K562 (cell line): ENCODE measurements at regions of chr17 and their contacts with region 1.

Region 1: GRCh38 chr17:75667021-75667790 is at the starts of genes RECQL5 and SAP30BP:
- DNase-seq: peak; percentile 92 to 99 (median 96)
- ATAC-seq: peak; percentile 100
- H3K4me3 ChIP-seq: peak within 1 kb of the TSS; percentile 85
- H3K27ac ChIP-seq: peak within 1 kb of the TSS; percentile 81
- H3K4me1 ChIP-seq: peaks cover 3 to 13% of the 10 kb centered on the region in 2 experiments; a peak in 4 of 5 replicates
- H3K27me3 ChIP-seq: no peaks in the 10 kb centered on the region
- CTCF ChIP-seq: no peak
- EP300 ChIP-seq: no peak
- POLR2A ChIP-seq: peak; percentile 91
- RAD21 ChIP-seq: no peak
- polyA plus RNA-seq, gene RECQL5: 4.1 to 5.8 TPM
- polyA plus RNA-seq, gene SAP30BP: 103 to 154 TPM

Region 2: DNA sequence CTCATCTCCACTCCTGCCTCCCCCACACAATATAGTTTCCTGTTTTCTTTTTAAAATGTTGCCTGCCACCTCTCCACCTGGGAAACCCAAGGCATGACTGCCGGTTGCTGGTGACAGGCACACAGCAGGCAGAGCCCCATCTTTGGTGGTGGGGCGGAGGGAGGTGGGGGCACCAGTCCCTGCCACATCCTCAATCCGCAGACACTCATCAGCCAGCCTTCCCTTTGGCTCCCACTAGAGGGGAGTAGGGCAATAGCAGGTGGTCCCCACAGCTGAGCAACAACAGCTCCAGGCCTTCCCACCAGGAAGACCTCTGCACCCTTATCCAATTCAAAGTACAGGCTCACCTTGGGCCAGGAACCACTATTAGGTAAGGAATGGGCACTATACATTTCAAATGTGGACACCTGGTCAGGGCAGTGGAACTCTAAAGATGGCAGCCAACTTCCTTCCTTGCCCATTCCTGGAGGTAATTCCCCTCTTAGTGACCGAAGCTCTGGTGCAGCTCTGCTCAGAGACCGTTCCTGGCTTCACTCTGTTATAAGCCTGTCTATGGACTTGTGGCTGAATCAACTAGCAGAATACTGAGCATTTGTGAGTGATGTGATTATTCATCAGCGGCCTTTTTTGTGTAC is 14.2 kb before region 1 on chr17:
- CTCF ChIA-PET with region 1: no interaction called
- POLR2A ChIA-PET with region 1: interaction called, 12 read pairs
- in situ Hi-C with region 1: no loop called
- intact Hi-C with region 1: no loop called
- DNase-seq: peak; percentile 63 to 71 (median 66)
- ATAC-seq: peak; percentile 94
- H3K4me3 ChIP-seq: no peak overlapping the region
- H3K27ac ChIP-seq: no peak overlapping the region
- H3K4me1 ChIP-seq: no peaks in the 10 kb centered on the region
- H3K27me3 ChIP-seq: no peaks in the 10 kb centered on the region
- CTCF ChIP-seq: peak; percentile 79 to 91 (median 83)
- EP300 ChIP-seq: no peak
- POLR2A ChIP-seq: no peak
- RAD21 ChIP-seq: peak; percentile 15 to 63; a peak in 2 of 4 replicates